PC-9 (cell line): ENCODE measurements at regions of chr11 and their contacts with region 1.

Region 1: GRCh38 chr11:121655537-121656327 is 203.0 kb upstream of the SORL1-AS1 start:
- DNase-seq: peak; percentile 58 to 81
- H3K4me3 ChIP-seq: peak overlapping the region; percentile 60
- H3K27ac ChIP-seq: peak overlapping the region; percentile 52
- H3K4me1 ChIP-seq: peaks cover 11% of the 10 kb centered on the region; the same call in 1 of the 2 replicates
- H3K27me3 ChIP-seq: no peaks in the 10 kb centered on the region
- CTCF ChIP-seq: peak; percentile 94

Region 2: DNA sequence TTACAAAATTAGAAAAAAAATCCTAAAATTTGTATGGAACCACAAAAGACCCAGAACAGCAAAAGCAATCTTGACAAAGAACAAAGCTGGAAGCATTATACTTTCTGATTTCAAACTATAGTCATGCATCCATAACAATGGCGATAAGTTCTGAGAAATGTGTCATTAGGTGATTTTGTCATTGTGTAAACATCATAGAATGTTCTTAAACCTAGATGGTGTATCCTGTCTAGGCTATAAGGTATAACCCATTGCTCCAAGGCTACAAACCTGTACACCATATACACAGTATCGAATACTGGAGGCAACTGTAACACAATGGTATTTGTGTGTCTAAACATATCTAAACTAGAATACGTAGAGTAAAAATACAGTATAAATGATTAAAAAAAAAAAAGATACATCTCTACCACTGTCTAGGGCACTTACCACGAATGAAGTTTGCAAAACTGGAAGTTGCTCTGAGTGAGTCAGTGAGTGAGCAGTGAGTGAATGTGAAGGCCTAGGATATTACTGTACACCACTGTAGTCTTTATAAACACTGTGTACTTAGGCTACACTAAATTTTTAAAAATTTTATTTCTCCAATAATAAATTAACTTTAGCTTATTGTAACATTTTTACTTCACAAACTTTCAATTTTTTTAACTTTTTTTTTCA is 381.3 kb before region 1 on chr11:
- CTCF ChIA-PET with region 1: no interaction called
- POLR2A ChIA-PET with region 1: no interaction called
- intact Hi-C with region 1: no loop called
- DNase-seq: peak in 1 of 2 experiments; percentile 30
- H3K4me3 ChIP-seq: no peak overlapping the region
- H3K27ac ChIP-seq: no peak overlapping the region
- H3K4me1 ChIP-seq: no peaks in the 10 kb centered on the region
- H3K27me3 ChIP-seq: peaks cover 65% of the 10 kb centered on the region
- CTCF ChIP-seq: no peak

Region 3: DNA sequence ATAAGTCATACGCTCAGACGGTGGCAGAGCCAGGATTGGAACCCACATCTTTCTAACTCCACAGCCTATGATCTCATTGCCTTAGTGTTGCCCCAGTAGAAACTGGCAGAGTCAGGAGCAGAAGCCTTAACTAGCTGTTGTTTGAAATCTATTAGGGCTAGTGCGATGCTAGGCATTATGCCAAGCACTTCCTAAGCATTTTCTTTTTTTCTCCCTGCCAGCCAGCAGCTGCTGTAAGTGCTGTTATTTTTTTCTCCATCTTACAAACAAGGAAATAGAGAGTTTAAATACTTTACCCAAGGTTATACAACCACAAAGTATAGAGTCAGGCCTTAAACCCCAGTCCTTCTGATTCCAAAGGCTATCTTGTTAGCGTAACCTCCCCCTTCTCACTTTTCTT is 42.0 kb before region 1 on chr11:
- CTCF ChIA-PET with region 1: no interaction called
- POLR2A ChIA-PET with region 1: no interaction called
- intact Hi-C with region 1: loop called (anchors 2 kb)
- DNase-seq: peak in 1 of 2 experiments; percentile 42
- H3K4me3 ChIP-seq: no peak overlapping the region
- H3K27ac ChIP-seq: no peak overlapping the region
- H3K4me1 ChIP-seq: peaks cover 21% of the 10 kb centered on the region
- H3K27me3 ChIP-seq: peaks cover 55% of the 10 kb centered on the region
- CTCF ChIP-seq: no peak

Region 4: GRCh38 chr11:121716060-121716459 is 60.3 kb after region 1 on chr11:
- CTCF ChIA-PET with region 1: no interaction called
- POLR2A ChIA-PET with region 1: no interaction called
- intact Hi-C with region 1: no loop called
- DNase-seq: no peak
- H3K4me3 ChIP-seq: no peak overlapping the region
- H3K27ac ChIP-seq: no peak overlapping the region
- H3K4me1 ChIP-seq: no peaks in the 10 kb centered on the region
- H3K27me3 ChIP-seq: no peaks in the 10 kb centered on the region
- CTCF ChIP-seq: no peak

Region 5: GRCh38 chr11:121892131-121892681 is 236.5 kb after region 1 on chr11:
- CTCF ChIA-PET with region 1: no interaction called
- POLR2A ChIA-PET with region 1: no interaction called
- intact Hi-C with region 1: loop called (anchors 1 kb)
- DNase-seq: peak; percentile 21 to 44
- H3K4me3 ChIP-seq: no peak overlapping the region
- H3K27ac ChIP-seq: peak overlapping the region; percentile 76
- H3K4me1 ChIP-seq: peaks cover 75% of the 10 kb centered on the region
- H3K27me3 ChIP-seq: no peaks in the 10 kb centered on the region
- CTCF ChIP-seq: no peak

Region 6: DNA sequence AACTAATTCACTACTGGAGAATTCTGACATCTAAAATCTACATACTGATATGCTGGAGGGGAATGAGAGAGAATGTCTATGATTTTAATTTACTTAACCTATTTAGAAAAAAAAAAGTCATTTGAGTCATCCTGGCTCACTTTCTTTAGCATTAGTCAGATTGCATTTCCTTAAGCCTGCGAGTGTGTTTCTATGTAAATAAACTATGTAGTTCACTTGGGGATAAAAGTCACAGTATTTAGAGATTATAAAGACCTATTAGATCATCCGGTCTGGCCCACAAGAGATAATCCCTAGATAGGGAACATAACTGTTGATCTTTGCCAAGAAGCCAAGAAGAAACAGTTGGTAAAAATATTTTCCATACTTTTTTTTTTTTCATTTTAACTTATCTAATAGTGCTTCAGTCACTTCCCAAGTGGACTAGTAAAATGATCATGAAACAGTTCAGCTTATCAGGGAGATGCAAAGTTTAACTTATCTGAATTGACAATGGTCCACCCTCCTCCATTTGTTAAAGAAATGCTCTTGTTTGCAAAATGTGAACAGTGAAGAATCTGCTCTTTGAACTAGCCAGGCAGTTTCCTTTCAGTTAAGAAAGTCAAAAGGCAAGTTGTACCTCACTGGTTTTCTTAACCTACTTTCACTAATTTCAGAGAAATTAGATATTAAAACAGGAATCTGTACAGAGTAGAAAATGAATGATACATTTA is 481.5 kb after region 1 on chr11:
- CTCF ChIA-PET with region 1: no interaction called
- POLR2A ChIA-PET with region 1: no interaction called
- intact Hi-C with region 1: loop called (anchors 10 kb)
- DNase-seq: peak in 1 of 2 experiments; percentile 95
- H3K4me3 ChIP-seq: no peak overlapping the region
- H3K27ac ChIP-seq: peak overlapping the region; percentile 74
- H3K4me1 ChIP-seq: peaks cover 55% of the 10 kb centered on the region
- H3K27me3 ChIP-seq: no peaks in the 10 kb centered on the region
- CTCF ChIP-seq: no peak